MCF 10A (cell line): ENCODE measurements at regions of chr1 and their contacts with region 1.

Region 1: DNA sequence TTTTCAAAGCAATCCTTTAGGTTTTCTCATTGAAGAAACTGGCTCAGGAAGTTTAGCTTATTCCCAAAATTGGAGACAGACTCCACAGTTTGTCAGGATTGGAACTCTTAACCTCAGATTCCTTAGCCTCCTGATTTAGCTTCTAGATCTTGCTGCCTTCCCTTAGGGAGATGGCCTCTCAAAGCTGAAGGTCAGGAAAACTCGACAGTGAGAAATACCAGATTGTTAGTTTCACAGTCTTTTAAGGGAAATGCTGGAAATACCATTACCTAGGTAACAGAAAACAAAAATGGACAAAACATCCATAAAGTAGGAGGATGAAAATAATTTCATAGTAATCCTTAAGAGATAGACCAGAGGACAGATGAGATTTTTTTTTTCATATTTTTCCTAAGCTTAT is 7.8 kb downstream of the RASAL2 start:
- DNase-seq: no peak
- H3K4me3 Mint-ChIP-seq: no peak overlapping the region
- H3K27ac Mint-ChIP-seq: no peak overlapping the region
- H3K4me1 Mint-ChIP-seq: peaks cover 40% of the 10 kb centered on the region
- H3K27me3 Mint-ChIP-seq: no peaks in the 10 kb centered on the region
- CTCF ChIP-seq: no peak

Region 2: DNA sequence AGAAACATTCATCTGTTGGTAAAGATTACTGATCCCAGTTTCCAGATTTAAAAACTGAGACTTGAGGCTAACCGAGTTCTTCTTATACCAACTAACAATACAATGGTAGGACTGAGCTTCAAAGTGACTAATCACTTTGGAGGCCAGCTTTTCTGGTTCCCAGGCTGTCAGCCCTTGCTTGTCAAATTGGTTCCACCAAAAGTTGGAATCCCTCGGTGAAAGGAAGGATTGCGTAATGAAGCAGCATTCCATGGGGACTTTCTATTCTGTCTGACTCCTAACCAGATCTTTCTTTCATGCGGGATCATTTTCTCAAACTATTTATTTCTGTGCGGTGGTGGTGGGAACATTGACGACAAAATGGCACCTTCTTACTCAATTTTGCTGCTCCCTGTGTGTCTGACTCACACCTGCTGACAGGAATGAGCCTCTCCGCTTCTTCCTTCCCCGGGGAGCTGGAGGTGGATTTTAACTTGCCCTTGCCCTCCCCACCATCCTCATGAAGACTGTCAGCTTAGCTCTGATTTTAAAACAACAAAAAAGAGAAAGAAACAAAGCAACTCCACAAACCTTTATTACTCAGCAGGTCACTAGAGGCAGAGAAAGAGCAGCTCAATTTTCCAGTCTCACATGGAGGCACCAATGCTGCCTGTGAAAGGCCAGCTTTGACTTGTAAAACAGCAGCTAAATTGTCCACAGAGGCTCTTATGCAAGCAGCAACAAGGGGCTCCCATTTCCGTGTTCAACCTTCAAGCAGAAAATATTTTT is 40.7 kb before region 1 on chr1:
- CTCF ChIA-PET with region 1: interaction called, 10 read pairs
- POLR2A ChIA-PET with region 1: interaction called, 5 read pairs
- intact Hi-C with region 1: no loop called
- DNase-seq: peak; percentile 90
- H3K4me3 Mint-ChIP-seq: peak overlapping the region; percentile 48
- H3K27ac Mint-ChIP-seq: peak overlapping the region; percentile 77
- H3K4me1 Mint-ChIP-seq: peaks cover 34% of the 10 kb centered on the region
- H3K27me3 Mint-ChIP-seq: no peaks in the 10 kb centered on the region
- CTCF ChIP-seq: peak; percentile 5

Region 3: DNA sequence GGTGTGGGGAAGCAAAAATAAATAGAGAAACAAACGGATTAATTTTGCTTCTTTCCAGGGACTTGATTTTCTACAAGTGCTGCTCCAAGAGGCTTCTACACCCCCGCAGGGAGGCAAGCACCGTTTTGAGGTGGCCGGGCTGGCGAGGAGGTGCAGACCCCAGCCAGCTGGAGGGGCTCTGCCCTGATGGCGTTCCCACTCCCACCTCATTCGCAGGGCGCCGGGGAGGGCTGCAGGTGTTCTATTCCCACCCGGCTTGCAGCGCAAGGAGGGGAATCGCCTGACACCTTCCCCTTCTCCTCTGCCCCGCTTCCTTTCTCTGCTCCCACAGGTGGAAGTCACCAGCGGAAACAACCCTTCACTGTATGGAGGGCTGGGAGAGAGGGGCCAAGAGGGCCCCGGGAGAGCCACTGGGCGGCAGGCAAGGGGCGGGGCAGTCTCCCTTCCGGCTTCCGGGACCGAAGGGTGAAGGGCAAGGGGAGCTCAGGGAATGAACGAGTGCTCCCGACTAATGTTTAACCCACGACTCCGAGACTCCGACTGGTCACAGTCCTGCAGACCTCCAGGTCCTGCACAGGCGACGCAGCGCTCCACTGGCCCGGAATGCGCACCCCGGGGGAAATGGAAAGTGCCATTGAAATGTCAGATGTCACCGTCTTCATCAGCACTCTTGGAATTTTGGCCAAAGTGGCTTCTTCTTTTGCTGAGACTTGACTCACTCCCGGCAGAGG is 440.3 kb after region 1 on chr1:
- CTCF ChIA-PET with region 1: no interaction called
- POLR2A ChIA-PET with region 1: no interaction called
- intact Hi-C with region 1: no loop called
- DNase-seq: peak; percentile 51
- H3K4me3 Mint-ChIP-seq: peak overlapping the region; percentile 95
- H3K27ac Mint-ChIP-seq: peak overlapping the region; percentile 80
- H3K4me1 Mint-ChIP-seq: peaks cover 42% of the 10 kb centered on the region
- H3K27me3 Mint-ChIP-seq: no peaks in the 10 kb centered on the region
- CTCF ChIP-seq: no peak